AG04450 (cell line): ENCODE measurements at regions of chr6 and their contacts with region 1.

Region 1: DNA sequence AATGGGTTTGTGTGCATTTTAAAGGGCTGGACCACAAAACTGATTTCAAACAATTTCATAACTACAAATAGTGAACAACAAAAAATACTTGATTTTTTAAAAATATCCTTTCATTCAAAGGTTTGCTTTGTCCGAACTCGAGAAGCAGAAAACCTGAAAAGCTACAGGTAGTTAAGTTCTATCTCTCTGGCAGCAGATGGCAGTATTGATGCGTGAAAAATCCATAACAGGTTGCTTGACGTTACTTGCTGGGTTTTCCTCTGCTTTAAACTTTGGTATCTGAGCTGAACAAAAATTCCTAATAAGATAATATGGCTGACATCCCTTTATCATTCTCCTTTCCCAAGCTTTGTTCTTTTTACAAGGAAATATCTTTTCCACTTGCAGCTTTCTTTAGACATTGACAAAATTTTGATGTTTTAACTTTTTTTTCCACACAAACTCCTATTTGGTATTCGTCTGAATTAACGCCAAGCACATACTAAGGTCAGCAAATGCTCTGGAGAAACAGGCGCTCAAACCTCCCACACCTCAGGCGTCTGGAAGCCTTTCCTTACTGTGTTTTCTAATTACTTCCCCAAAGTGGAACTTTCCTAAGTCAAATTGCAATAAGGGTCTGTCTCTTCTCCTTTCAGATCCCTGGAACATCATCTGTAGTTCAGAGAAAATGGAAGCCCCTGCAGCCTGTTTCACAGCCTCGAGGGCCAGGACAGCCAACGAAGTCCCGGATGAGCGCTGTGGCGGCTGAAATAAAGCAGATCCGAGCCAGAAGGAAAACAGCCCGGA is 50.3 kb upstream of the GFRAL start:
- DNase-seq: peak; percentile 26
- H3K4me3 ChIP-seq: no peak overlapping the region
- H3K27ac ChIP-seq: no peak overlapping the region
- H3K27me3 ChIP-seq: no peaks in the 10 kb centered on the region
- CTCF ChIP-seq: peak; percentile 75

Region 2: DNA sequence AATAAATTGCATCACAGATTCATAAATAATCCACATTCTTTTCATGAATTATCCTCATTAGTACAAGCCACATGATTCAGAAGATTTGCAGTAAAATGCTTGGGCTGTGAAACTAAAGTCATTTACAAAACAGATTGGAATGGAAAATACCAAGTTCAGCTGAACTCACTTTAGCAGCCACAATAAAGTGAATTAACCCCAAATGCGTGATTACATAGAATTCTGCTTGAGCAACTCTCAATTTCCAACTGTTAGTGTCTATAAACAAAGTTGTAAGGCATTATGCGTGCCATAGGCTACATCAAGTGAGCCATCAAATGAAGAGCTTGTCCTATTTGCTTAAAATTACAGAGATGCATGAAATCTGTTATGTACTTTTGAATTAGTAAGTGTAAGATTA is 10.0 kb before region 1 on chr6:
- CTCF ChIA-PET with region 1: interaction called, 19 read pairs
- POLR2A ChIA-PET with region 1: no interaction called
- DNase-seq: no peak
- H3K4me3 ChIP-seq: no peak overlapping the region
- H3K27ac ChIP-seq: no peak overlapping the region
- H3K27me3 ChIP-seq: no peaks in the 10 kb centered on the region
- CTCF ChIP-seq: no peak

Region 3: GRCh38 chr6:55445648-55446204 is 168.8 kb after region 1 on chr6:
- CTCF ChIA-PET with region 1: interaction called, 32 read pairs
- POLR2A ChIA-PET with region 1: no interaction called
- DNase-seq: no peak
- H3K4me3 ChIP-seq: no peak overlapping the region
- H3K27ac ChIP-seq: no peak overlapping the region
- H3K27me3 ChIP-seq: no peaks in the 10 kb centered on the region
- CTCF ChIP-seq: peak; percentile 57

Region 4: GRCh38 chr6:55604021-55604420 is 327.1 kb after region 1 on chr6:
- CTCF ChIA-PET with region 1: no interaction called
- POLR2A ChIA-PET with region 1: no interaction called
- DNase-seq: no peak
- H3K4me3 ChIP-seq: no peak overlapping the region
- H3K27ac ChIP-seq: no peak overlapping the region
- H3K27me3 ChIP-seq: no peaks in the 10 kb centered on the region
- CTCF ChIP-seq: no peak

Region 5: GRCh38 chr6:55953335-55953734 is 676.4 kb after region 1 on chr6:
- CTCF ChIA-PET with region 1: interaction called, 99 read pairs
- POLR2A ChIA-PET with region 1: no interaction called
- DNase-seq: peak; percentile 33
- H3K4me3 ChIP-seq: peak overlapping the region; percentile 34
- H3K27ac ChIP-seq: no peak overlapping the region
- H3K27me3 ChIP-seq: no peaks in the 10 kb centered on the region
- CTCF ChIP-seq: peak; percentile 62

Region 6: DNA sequence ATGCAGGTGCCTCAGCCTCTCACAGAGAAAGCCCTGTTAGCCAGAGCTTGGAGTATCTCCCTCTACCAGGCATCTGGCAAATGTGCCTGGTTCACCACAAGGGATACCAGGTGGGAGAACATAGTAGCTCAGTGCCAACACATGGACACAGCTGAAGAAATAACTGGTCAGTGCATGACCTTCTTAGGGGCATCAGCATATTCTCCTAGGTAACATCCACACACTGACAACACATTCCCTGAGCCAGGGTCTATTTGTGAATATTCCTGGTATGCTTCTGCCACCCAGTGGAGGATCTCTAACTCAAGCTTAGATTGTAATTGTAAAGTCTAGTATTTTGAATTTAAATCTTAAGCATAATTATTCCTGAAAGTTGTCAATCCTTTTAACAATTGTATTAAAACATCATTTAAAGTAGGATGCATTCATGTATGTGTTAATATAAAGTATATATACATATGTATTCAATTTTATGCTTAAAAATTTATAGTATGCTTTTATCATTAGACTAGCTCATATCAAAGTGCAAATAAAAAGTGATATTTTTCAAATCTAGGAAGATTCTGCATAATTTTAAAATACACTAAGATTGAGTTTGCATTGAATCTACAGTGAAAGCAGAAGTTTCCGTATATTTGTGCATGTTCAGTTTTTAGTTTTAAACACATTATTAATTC is 1015.7 kb after region 1 on chr6:
- CTCF ChIA-PET with region 1: interaction called, 61 read pairs
- POLR2A ChIA-PET with region 1: no interaction called
- DNase-seq: peak; percentile 41
- H3K4me3 ChIP-seq: no peak overlapping the region
- H3K27ac ChIP-seq: no peak overlapping the region
- H3K27me3 ChIP-seq: no peaks in the 10 kb centered on the region
- CTCF ChIP-seq: peak; percentile 70